PC-9 (cell line): ENCODE measurements at regions of chr20 and their contacts with region 1.

Region 1: GRCh38 chr20:58863031-58863790 is 10.7 kb downstream of the GNAS start:
- DNase-seq: no peak
- H3K4me3 ChIP-seq: no peak overlapping the region
- H3K27ac ChIP-seq: no peak overlapping the region
- H3K4me1 ChIP-seq: 0 out of 2 replicates have a peak, but pooled peaks cover 7% of the 10 kb centered on the region
- H3K27me3 ChIP-seq: peaks cover 19% of the 10 kb centered on the region
- CTCF ChIP-seq: no peak

Region 2: DNA sequence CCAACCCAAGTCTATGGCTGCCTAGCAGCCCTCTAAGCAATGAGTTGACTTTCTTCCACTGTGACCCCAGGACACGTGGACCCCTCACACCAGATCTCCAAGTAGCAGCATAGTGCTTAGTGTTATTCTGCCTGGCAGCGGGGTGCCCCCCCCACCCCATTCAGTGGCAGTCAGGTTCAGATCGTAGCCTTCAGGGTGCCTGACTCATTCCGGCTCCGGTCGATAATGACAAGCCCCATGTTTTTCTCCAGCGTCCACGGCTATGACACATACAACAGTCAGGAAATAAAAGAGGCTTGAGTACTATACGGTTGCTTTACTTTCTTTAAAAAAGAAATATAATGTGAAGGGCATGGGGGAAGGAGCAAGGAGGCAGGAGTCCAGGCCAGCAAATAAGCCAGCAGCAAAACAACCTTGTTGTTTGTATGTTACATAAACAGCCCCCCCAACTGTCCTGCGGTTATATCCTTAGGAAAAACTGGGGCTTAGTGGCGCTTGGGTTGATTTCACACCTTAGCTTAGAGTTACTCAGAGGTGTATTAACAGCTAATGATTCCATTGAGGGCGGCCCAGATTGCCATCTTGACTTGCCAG is 12.4 kb after region 1 on chr20:
- CTCF ChIA-PET with region 1: interaction called, 10 read pairs
- POLR2A ChIA-PET with region 1: no interaction called
- intact Hi-C with region 1: no loop called
- DNase-seq: peak in 1 of 2 experiments; percentile 45
- H3K4me3 ChIP-seq: no peak overlapping the region
- H3K27ac ChIP-seq: no peak overlapping the region
- H3K4me1 ChIP-seq: no peaks in the 10 kb centered on the region
- H3K27me3 ChIP-seq: no peaks in the 10 kb centered on the region
- CTCF ChIP-seq: no peak

Region 3: GRCh38 chr20:58963064-58963584 is 99.9 kb after region 1 on chr20:
- CTCF ChIA-PET with region 1: no interaction called
- POLR2A ChIA-PET with region 1: no interaction called
- intact Hi-C with region 1: no loop called
- DNase-seq: no peak
- H3K4me3 ChIP-seq: no peak overlapping the region
- H3K27ac ChIP-seq: no peak overlapping the region
- H3K4me1 ChIP-seq: no peaks in the 10 kb centered on the region
- H3K27me3 ChIP-seq: no peaks in the 10 kb centered on the region
- CTCF ChIP-seq: no peak